Ascending aorta (tissue), 2 donors: ENCODE measurements at regions of chr11 and their contacts with region 1.

Region 1: DNA sequence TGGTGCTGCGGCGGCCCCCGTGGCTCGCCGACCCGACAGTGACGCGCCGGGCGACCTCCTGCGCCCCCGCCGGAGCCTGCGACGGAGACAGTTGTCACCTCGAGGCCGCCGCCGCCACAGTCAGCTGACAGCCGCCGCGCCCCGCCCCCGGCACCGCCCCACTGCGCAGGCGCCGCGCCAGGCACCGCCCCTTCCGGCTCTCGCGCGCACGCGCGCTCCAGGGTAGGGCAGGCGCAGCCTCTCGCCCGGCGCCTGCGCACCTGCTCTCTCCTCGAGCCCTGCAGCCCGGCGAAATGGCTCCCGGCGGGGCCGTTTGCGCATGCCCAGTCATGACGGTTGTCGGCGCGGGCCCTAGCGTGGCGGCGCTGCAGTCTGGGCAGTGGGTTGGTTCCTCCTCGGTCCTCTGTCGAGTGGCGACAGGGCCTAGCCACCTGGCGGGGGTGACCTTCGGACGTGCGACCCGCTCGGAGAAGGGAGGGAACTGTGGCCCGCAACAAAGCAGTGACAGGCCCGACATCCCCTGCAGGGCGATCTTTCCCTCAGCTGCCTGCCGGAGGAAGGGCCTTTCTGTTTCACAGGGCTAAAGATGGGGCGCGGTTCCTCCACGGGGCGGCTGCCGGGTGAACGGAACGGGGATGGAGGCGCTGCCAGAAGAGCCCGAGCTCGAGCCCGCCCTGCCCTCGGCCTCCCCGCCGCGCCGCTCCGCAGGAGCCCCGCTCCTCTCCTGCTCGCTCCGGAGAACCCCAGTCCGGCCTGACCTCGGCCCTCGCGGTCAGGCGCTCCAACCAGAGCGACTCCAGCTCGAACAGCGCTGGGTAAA is at the start of gene TOLLIP:
- DNase-seq: peak; percentile 80 to 97
- H3K4me3 ChIP-seq: peak within 1 kb of the TSS; percentile 98 to 99
- H3K27ac ChIP-seq: peak within 1 kb of the TSS; percentile 91 to 92
- H3K4me1 ChIP-seq: peaks cover 15 to 25% of the 10 kb centered on the region in 2 donors
- H3K27me3 ChIP-seq: no peaks in the 10 kb centered on the region
- CTCF ChIP-seq: peak in 2 of 3 experiments; percentile 14 to 49
- total RNA-seq, gene TOLLIP: 63.0 TPM

Region 2: DNA sequence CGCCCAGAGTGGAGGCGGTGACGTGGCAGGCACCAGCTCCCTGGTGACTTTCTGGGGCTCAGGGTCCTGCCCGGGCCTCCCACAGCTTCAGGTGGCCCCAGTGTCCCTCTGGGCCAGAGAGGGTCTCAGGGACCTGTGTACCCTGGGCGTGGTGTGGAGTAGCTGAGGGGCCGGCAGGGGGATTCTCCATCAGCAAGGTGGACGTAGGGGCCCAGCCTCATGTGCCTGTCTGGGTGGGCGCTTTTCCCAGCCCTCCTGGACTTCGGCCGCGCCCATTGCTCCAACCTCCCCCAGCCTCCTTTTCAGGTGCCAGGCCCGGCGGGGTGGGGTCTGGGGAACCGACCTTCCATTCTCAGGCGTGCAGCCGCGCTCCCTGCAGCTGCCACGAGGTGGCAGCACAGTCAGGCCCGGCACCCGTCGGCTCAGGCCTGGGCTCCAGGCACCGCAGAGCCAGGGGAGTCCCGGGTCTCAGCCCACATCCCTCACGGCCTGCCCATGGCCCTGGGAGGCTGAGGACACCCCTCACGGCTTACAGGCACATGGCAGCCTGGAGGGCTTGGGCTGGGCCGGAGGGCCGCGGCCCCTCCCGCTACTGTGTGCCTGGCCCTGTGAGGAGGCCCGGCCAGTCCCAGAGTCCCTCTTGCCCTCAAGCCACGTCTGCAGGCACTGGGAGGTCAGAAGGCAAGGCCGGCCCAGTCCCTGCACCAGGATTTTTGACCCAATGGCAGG is 106.8 kb before region 1 on chr11:
- intact Hi-C with region 1: loop called (anchors 10 kb)
- DNase-seq: peak in 1 of 2 donors; percentile 68
- H3K4me3 ChIP-seq: no peak overlapping the region
- H3K27ac ChIP-seq: no peak overlapping the region
- H3K4me1 ChIP-seq: no peaks in the 10 kb centered on the region
- H3K27me3 ChIP-seq: no peaks in the 10 kb centered on the region
- CTCF ChIP-seq: peak; percentile 86 to 96 (median 87)

Region 3: DNA sequence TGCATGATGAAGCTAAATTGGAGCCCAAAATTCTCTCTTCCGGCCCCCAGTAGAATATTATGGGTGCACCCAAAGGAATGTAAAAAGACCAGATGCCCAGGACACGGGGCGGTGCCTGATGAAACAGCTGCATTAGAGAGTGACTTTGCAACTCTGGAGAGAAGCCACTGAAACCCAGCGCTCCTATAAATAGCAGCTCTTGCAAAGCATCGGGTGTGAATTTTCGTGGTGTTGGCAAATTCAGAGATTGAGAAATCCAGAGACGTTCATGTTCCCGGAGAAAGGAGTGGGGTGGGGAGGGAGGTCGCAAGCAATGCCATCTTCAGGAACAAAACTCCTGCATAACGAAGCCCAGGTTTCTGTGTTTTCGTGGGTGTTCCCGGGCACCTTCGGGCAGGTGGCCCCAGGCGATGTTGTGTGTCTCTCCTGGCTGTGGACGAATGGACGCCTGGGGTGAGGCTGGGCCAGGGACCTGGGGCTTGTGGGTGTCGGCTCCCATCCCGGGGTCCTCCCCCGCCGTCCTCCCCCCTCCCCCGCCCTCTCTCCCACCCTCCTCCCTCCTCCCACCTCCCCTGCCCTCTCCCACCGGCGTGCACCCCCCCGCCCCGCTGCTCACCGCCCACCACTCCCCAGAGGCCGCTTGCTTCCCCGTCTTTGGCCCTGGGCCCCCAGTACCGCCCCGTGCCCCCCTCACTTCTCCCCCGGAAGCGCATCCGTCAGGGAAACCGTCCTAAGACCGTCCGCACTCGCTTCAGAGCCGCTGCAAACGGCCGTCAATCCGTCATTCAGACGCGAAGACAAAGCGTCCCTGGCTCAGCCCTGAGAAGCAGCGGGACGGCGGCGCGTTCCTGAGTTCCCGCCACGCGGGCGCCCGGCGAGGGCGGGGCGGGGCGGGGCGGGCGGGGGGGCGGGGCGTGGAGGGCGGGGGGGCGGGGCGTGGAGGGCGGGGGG is 26.4 kb after region 1 on chr11:
- intact Hi-C with region 1: loop called (anchors 1 kb)
- DNase-seq: peak; percentile 59 to 93
- H3K4me3 ChIP-seq: peak overlapping the region; percentile 61 to 66
- H3K27ac ChIP-seq: peak overlapping the region; percentile 87
- H3K4me1 ChIP-seq: peaks cover 5 to 8% of the 10 kb centered on the region in 2 donors
- H3K27me3 ChIP-seq: no peaks in the 10 kb centered on the region
- CTCF ChIP-seq: no peak